CD8-positive, alpha-beta T cell (primary cell): ENCODE measurements at regions of chr1 and their contacts with region 1.

Region 1: DNA sequence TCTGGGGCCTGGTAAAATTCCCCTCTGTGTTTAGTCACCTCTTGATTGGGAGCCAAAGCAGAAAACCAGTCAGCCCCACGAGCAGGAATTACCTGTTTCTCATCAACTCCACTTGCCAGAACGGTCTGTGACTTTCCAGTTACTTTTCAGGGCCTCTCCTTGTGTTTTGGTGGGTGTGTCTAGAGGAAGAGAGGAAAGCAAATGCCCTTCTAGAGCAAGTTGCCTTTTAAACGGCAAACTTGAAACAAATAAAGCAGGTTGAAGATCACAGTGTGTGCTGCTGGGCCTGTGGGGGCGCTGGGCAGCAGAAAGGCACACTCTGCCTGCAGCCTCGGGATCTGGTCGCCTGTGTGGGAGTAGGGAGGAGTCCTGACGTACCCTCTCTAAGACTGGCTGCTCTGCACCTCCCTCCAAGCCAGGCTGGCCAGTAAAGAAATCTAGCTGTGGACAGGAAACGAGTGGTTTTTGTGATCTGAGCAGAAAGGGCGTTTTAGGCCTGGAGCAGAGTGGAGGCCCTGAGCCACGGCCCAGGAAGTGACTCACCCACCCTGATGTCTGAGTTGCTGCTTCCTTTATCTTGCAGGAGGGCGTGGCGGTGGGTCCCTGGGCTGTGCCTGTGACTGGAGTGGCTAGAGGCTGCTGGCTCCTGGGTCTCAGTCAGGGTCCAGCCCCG is 11.1 kb upstream of the S100A11 start:
- DNase-seq: peak; percentile 64 to 94 (median 90)
- ATAC-seq: peak; percentile 89
- H3K4me3 ChIP-seq: peak overlapping the region; percentile 15 to 35
- H3K4me3 Mint-ChIP-seq: peak overlapping the region; percentile 68
- H3K27ac ChIP-seq: peak overlapping the region; percentile 54 to 97
- H3K27ac Mint-ChIP-seq: peak overlapping the region; percentile 98
- H3K4me1 ChIP-seq: peaks cover 20% of the 10 kb centered on the region
- H3K4me1 Mint-ChIP-seq: peaks cover 19% of the 10 kb centered on the region
- H3K27me3 ChIP-seq: no peaks in the 10 kb centered on the region
- H3K27me3 Mint-ChIP-seq: peaks cover 2% of the 10 kb centered on the region
- CTCF ChIP-seq: peak; percentile 43

Region 2: DNA sequence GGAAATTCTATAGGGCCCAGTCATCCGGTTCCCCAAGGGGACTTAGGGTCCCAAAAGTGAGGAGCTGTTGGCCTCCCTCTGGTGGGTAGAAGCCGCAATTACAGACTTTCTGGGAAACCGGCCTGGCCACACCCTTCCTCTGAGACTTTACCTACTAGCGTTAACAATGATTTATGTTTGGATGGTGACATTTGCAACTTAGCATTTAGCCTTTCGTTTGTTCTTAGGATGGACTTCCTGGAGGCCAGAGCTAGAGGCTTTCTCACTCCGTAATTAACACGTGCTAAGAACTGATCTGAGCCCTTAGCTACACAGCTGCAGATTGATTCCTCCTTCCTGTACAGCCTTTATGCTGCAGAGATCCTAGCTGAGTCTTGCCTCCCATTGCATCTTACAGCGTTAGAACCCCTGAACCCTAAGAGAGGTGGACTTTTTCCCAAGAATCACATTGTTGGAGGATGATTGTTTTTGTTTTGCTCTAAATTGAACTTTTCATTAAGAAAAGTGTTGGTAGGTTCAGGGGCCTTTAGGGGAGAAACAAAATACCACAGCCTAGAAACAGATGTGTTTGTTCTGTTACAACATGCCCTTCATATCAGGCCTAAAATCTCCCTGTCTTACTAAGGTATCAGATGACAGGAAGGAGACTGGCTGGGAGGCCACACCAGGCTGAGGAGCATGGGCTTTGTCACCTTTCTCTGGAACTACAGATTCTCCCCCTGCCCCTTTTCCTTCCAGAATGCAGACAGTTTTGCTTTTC is 13.0 kb before region 1 on chr1:
- CTCF ChIA-PET with region 1: interaction called, 120 read pairs
- POLR2A ChIA-PET with region 1: interaction called, 41 read pairs
- intact Hi-C with region 1: loop called (anchors 1 kb)
- DNase-seq: peak; percentile 39 to 84 (median 65)
- ATAC-seq: peak; percentile 80
- H3K4me3 ChIP-seq: peak overlapping the region; percentile 65 to 86
- H3K4me3 Mint-ChIP-seq: peak overlapping the region; percentile 96
- H3K27ac ChIP-seq: peak overlapping the region; percentile 63 to 88
- H3K27ac Mint-ChIP-seq: peak overlapping the region; percentile 94
- H3K4me1 ChIP-seq: peaks cover 35% of the 10 kb centered on the region
- H3K4me1 Mint-ChIP-seq: peaks cover 54% of the 10 kb centered on the region
- H3K27me3 ChIP-seq: no peaks in the 10 kb centered on the region
- H3K27me3 Mint-ChIP-seq: no peaks in the 10 kb centered on the region
- CTCF ChIP-seq: peak; percentile 74

Region 3: GRCh38 chr1:152067150-152067549 is 19.3 kb after region 1 on chr1:
- CTCF ChIA-PET with region 1: interaction called, 36 read pairs
- POLR2A ChIA-PET with region 1: no interaction called
- intact Hi-C with region 1: no loop called
- DNase-seq: no peak
- ATAC-seq: no peak
- H3K4me3 ChIP-seq: no peak overlapping the region
- H3K4me3 Mint-ChIP-seq: no peak overlapping the region
- H3K27ac ChIP-seq: no peak overlapping the region
- H3K27ac Mint-ChIP-seq: no peak overlapping the region
- H3K4me1 ChIP-seq: no peaks in the 10 kb centered on the region
- H3K4me1 Mint-ChIP-seq: no peaks in the 10 kb centered on the region
- H3K27me3 ChIP-seq: no peaks in the 10 kb centered on the region
- H3K27me3 Mint-ChIP-seq: peaks cover 40% of the 10 kb centered on the region
- CTCF ChIP-seq: no peak

Region 4: DNA sequence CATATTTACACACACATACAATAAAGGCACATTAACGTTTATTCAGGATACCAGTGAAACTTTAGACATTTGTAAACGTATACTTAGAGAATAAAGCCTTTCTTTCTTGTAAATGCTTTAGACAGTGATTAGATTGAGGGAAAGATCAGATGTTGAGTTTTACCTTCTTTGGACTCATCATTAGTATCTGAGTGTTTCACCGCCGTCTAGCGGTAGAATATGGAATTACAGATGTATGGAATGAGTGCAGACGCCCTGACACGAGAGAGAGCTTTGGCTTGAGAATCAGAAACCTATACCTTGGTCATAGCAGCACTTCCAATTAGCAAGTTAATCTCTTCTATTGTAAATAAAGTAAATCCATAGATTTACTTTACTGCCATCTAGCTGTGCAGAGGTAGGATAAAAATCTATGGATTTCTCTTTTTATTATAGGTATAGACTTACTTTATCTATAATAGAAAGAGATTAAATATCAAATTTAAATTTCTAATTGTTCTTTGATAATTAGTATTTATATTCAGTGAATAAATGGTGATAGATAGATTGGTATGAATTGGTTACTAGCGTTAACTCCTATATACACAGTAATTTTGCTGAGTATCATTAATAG is 299.4 kb after region 1 on chr1:
- CTCF ChIA-PET with region 1: interaction called, 4 read pairs
- POLR2A ChIA-PET with region 1: no interaction called
- intact Hi-C with region 1: loop called (anchors 1 to 2 kb)
- DNase-seq: peak in 8 of 9 experiments; percentile 5 to 71 (median 36)
- ATAC-seq: peak; percentile 58
- H3K4me3 ChIP-seq: no peak overlapping the region
- H3K4me3 Mint-ChIP-seq: no peak overlapping the region
- H3K27ac ChIP-seq: no peak overlapping the region
- H3K27ac Mint-ChIP-seq: no peak overlapping the region
- H3K4me1 ChIP-seq: no peaks in the 10 kb centered on the region
- H3K4me1 Mint-ChIP-seq: no peaks in the 10 kb centered on the region
- H3K27me3 ChIP-seq: no peaks in the 10 kb centered on the region
- H3K27me3 Mint-ChIP-seq: peaks cover 8% of the 10 kb centered on the region
- CTCF ChIP-seq: peak; percentile 98

Region 5: DNA sequence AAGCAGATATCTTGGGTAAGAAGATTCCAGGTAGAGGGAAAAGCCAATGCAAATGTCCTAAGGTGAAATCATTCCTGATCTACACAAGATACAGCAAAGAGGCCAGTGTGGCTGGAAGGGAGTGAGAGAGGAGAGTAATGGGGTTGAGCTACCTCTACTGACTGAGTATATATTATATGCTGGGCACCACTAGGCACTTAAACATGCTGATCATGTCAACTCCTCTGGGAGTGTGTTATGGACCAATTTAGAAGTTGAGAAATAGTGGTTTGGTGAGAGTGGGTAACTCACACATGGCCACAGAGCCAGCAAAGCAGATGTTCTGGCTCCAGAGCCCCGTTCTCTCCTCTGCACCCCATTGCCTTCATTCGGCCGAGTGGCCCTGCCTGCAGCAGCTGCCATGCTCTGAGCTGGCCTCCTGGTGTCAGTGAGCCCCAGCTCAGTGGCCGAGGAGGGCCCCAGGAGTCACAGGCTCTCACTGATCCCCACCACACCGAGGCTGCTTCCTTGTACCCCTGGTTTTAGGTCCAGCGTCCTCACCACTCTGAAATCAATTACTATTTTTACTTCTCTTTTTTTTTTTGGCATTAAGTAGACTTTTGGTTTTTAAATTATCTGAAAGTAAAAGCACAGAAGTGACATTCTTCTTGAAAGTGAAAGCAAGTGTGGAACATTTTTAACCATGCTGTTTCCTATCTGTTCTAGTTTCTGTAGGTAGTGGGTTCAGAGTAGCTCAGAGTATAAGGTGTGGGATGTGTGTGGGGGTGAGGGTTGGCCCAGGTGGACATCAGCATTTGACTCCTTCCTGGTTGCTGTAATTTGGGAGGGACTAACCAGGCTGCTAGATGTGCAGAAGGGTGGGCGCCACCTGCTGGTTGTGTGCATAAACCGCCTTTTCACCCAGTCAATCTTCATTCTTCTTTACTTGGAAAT is 412.0 kb after region 1 on chr1:
- CTCF ChIA-PET with region 1: interaction called, 39 read pairs
- POLR2A ChIA-PET with region 1: no interaction called
- intact Hi-C with region 1: loop called (anchors 1 kb)
- DNase-seq: peak; percentile 45 to 86 (median 74)
- ATAC-seq: peak; percentile 66
- H3K4me3 ChIP-seq: peak overlapping the region in 1 of 2 experiments; percentile 16
- H3K4me3 Mint-ChIP-seq: peak overlapping the region; percentile 70
- H3K27ac ChIP-seq: peak overlapping the region in 1 of 2 experiments; percentile 72
- H3K27ac Mint-ChIP-seq: peak overlapping the region; percentile 83
- H3K4me1 ChIP-seq: no peaks in the 10 kb centered on the region
- H3K4me1 Mint-ChIP-seq: peaks cover 26% of the 10 kb centered on the region
- H3K27me3 ChIP-seq: no peaks in the 10 kb centered on the region
- H3K27me3 Mint-ChIP-seq: peaks cover 2% of the 10 kb centered on the region
- CTCF ChIP-seq: peak; percentile 70